Caco-2 (cell line): ENCODE measurements at regions of chr10 and their contacts with region 1.

Region 1: GRCh38 chr10:9733756-9734155 is 1283.9 kb upstream of the CELF2 start:
- DNase-seq: peak; percentile 79 to 81
- H3K4me3 ChIP-seq: no peak overlapping the region
- H3K4me3 Mint-ChIP-seq: peak overlapping the region; percentile 54
- H3K27ac Mint-ChIP-seq: peak overlapping the region; percentile 78
- H3K4me1 ChIP-seq: peaks cover 26% of the 10 kb centered on the region
- H3K4me1 Mint-ChIP-seq: peaks cover 20% of the 10 kb centered on the region
- H3K27me3 ChIP-seq: no peaks in the 10 kb centered on the region
- H3K27me3 Mint-ChIP-seq: no peaks in the 10 kb centered on the region
- CTCF ChIP-seq: no peak

Region 2: DNA sequence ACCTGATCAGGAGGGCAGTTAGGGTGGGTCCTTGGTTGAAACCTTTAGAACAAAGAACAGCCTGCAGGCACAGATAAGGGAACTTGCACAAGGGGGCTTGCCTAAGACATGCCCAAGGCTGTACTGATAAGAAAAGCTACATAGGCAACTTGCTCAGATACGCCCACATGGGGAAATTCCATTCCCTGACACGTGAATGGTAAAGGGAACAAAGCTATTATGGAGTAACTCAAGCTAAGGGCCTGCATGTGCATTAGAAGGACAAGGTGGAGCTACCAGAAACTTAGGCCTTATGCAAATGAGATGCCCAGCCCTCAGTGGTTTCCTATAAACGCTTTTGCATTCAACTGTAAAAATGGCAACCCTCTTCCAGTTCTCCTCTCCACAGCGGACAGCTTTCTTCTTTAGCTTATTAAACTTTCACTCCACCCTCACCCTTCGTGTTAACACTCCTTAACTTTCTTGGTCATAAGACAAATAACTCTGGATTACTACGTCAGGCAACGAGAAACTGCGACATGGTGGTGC is 91.8 kb after region 1 on chr10:
- CTCF ChIA-PET with region 1: no interaction called
- POLR2A ChIA-PET with region 1: no interaction called
- intact Hi-C with region 1: loop called (anchors 1 kb)
- DNase-seq: peak; percentile 91 to 94
- H3K4me3 ChIP-seq: no peak overlapping the region
- H3K4me3 Mint-ChIP-seq: no peak overlapping the region
- H3K27ac Mint-ChIP-seq: peak overlapping the region; percentile 83
- H3K4me1 ChIP-seq: peaks cover 48% of the 10 kb centered on the region
- H3K4me1 Mint-ChIP-seq: peaks cover 28% of the 10 kb centered on the region
- H3K27me3 ChIP-seq: no peaks in the 10 kb centered on the region
- H3K27me3 Mint-ChIP-seq: no peaks in the 10 kb centered on the region
- CTCF ChIP-seq: no peak

Region 3: GRCh38 chr10:9939716-9940115 is 206.0 kb after region 1 on chr10:
- CTCF ChIA-PET with region 1: no interaction called
- POLR2A ChIA-PET with region 1: no interaction called
- intact Hi-C with region 1: no loop called
- DNase-seq: no peak
- H3K4me3 ChIP-seq: no peak overlapping the region
- H3K4me3 Mint-ChIP-seq: no peak overlapping the region
- H3K27ac Mint-ChIP-seq: no peak overlapping the region
- H3K4me1 ChIP-seq: no peaks in the 10 kb centered on the region
- H3K4me1 Mint-ChIP-seq: no peaks in the 10 kb centered on the region
- H3K27me3 ChIP-seq: no peaks in the 10 kb centered on the region
- H3K27me3 Mint-ChIP-seq: peaks cover 9% of the 10 kb centered on the region
- CTCF ChIP-seq: no peak